ENCODE measurements at regions of chr7 and their contacts with region 1.

Region 1: DNA sequence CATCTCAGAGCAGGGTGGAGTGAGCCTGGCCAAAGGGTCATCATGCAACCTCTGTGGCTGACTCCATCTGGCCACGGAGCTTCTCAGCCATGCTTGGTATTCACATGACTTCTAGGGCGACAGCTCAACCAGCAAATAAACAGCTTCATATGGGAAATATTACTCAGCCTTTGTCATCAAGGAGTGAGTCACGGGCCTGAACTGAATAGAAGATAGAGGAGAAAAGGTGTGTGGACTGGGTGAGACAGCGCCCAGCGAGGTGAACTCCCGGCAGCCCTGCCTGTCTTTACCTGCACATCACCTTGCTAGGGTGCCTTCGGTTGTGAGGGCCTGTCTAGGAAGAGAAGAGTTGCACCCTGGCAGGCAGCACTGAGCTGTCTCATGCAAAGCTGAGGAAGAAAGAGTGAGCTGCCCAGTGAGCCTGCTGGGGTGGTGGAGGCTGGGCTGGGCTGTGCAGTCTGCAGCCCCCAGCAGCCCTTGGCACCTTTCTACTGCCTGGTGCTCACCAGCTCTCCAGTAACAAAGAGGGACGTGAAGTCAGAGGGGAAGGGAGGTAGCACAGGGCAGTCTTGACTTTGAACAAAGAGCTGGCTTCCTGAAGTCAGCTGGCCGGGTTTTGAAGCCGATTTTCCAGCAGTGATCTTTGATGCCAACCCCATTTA is 114.2 kb downstream of the EGFR start:
- DNase-seq: peak; percentile 97
- ATAC-seq: peak; percentile 83
- H3K4me3 ChIP-seq: peak overlapping the region; percentile 3 to 28
- H3K27ac ChIP-seq: peak overlapping the region; percentile 98
- H3K4me1 ChIP-seq: peaks cover 71 to 78% of the 10 kb centered on the region in 2 experiments
- H3K27me3 ChIP-seq: no peaks in the 10 kb centered on the region
- CTCF ChIP-seq: no peak
- POLR2A ChIP-seq: no peak
- RAD21 ChIP-seq: peak; percentile 38

Region 2: DNA sequence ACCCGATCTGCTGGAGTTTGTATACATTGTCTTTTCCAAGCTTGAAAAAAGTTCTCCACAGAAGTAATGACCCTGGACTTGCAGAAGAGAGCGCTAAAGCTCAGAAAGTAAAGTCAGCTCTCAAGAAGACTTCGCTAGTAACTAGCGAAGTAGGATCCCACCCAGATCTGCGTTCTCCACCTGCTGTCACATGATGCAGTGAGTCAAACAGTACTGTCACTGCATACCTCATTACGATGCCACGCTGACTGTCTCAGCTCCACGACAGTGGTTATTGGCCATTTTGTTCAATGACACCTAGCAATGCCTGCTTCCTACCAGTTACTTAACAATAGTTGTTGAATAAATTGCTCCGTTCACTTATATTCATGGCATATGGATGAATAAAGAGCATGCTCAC is 344.4 kb before region 1 on chr7:
- CTCF ChIA-PET with region 1: no interaction called
- POLR2A ChIA-PET with region 1: interaction called, 3 read pairs
- RAD21 ChIA-PET with region 1: no interaction called
- intact Hi-C with region 1: loop called (anchors 5 kb)
- DNase-seq: peak; percentile 95
- ATAC-seq: peak; percentile 99
- H3K4me3 ChIP-seq: no peak overlapping the region
- H3K27ac ChIP-seq: no peak overlapping the region
- H3K4me1 ChIP-seq: peaks cover 2 to 18% of the 10 kb centered on the region in 2 experiments; a peak in 3 of 4 replicates
- H3K27me3 ChIP-seq: no peaks in the 10 kb centered on the region
- CTCF ChIP-seq: peak; percentile 65 to 90 (median 73)
- POLR2A ChIP-seq: no peak
- RAD21 ChIP-seq: peak; percentile 96

Region 3: DNA sequence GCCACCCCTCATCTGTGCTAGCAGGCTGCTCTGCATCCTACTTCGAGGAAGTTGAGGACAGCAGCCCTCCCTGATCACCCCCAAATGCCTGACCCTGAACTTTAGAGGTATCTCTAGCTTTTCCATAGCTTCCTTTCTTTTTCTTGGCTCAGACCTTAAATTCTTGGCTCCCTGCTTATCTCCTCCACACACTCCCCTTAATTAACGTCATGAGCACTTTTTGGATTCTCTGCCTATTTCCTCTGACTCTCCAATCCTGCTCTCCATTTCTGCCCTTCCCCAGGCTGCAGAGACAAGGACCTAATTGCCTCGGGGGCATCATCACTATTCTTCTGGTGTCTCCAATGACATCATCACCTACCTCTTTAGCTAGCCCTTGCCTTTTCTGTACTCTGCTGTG is 333.2 kb before region 1 on chr7:
- CTCF ChIA-PET with region 1: no interaction called
- POLR2A ChIA-PET with region 1: no interaction called
- RAD21 ChIA-PET with region 1: no interaction called
- intact Hi-C with region 1: no loop called
- DNase-seq: no peak
- ATAC-seq: no peak
- H3K4me3 ChIP-seq: no peak overlapping the region
- H3K27ac ChIP-seq: no peak overlapping the region
- H3K4me1 ChIP-seq: peaks cover 0 to 3% of the 10 kb centered on the region in 2 experiments; a peak in 1 of 4 replicates
- H3K27me3 ChIP-seq: no peaks in the 10 kb centered on the region
- CTCF ChIP-seq: no peak
- POLR2A ChIP-seq: no peak
- RAD21 ChIP-seq: no peak

Region 4: GRCh38 chr7:54831644-54832099 is 301.3 kb before region 1 on chr7:
- CTCF ChIA-PET with region 1: no interaction called
- POLR2A ChIA-PET with region 1: interaction called, 6 read pairs
- RAD21 ChIA-PET with region 1: no interaction called
- intact Hi-C with region 1: loop called (anchors 2 kb)
- DNase-seq: peak; percentile 91
- ATAC-seq: peak; percentile 87
- H3K4me3 ChIP-seq: peak overlapping the region; percentile 26 to 38
- H3K27ac ChIP-seq: peak overlapping the region; percentile 77
- H3K4me1 ChIP-seq: peaks cover 13 to 38% of the 10 kb centered on the region in 2 experiments
- H3K27me3 ChIP-seq: no peaks in the 10 kb centered on the region
- CTCF ChIP-seq: no peak
- POLR2A ChIP-seq: no peak
- RAD21 ChIP-seq: peak; percentile 41

Region 5: GRCh38 chr7:55005241-55005851 is 127.7 kb before region 1 on chr7:
- CTCF ChIA-PET with region 1: no interaction called
- POLR2A ChIA-PET with region 1: no interaction called
- RAD21 ChIA-PET with region 1: no interaction called
- intact Hi-C with region 1: no loop called
- DNase-seq: no peak
- ATAC-seq: no peak
- H3K4me3 ChIP-seq: no peak overlapping the region
- H3K27ac ChIP-seq: no peak overlapping the region
- H3K4me1 ChIP-seq: no peaks in the 10 kb centered on the region
- H3K27me3 ChIP-seq: no peaks in the 10 kb centered on the region
- CTCF ChIP-seq: no peak
- POLR2A ChIP-seq: no peak
- RAD21 ChIP-seq: no peak

Region 6: GRCh38 chr7:55018361-55019190 is 114.4 kb before region 1 on chr7 and contains the start of gene EGFR:
- CTCF ChIA-PET with region 1: no interaction called
- POLR2A ChIA-PET with region 1: no interaction called
- RAD21 ChIA-PET with region 1: no interaction called
- intact Hi-C with region 1: loop called (anchors 2 kb)
- DNase-seq: peak; percentile 40
- ATAC-seq: peak; percentile 89
- H3K4me3 ChIP-seq: peak within 1 kb of the TSS; percentile 58 to 76
- H3K27ac ChIP-seq: peak within 1 kb of the TSS; percentile 88
- H3K4me1 ChIP-seq: peaks cover 12 to 17% of the 10 kb centered on the region in 2 experiments
- H3K27me3 ChIP-seq: no peaks in the 10 kb centered on the region
- CTCF ChIP-seq: no peak
- POLR2A ChIP-seq: no peak
- RAD21 ChIP-seq: no peak
- total RNA-seq, gene EGFR: 71.5 TPM

Region 7: DNA sequence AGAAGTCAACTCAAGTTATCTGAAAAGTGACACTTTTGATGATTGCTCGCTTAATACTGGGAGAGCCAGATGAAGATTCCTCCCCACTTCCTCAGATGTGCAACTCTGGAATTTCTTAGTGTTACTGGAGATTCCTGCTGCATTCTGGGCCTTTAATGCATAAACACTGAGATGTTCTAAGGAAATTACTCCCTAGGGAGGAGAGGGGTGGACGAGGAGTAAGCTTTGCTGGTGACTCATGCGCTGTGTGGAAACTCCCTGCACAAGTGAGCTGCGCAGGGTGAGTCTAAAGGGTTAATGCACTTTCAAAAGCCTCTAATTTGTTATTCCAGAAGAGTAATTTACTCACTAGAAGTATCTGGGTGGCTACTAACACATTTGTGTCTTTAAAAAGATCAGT is 67.9 kb before region 1 on chr7:
- CTCF ChIA-PET with region 1: no interaction called
- POLR2A ChIA-PET with region 1: interaction called, 5 read pairs
- RAD21 ChIA-PET with region 1: no interaction called
- intact Hi-C with region 1: loop called (anchors 2 kb)
- DNase-seq: peak; percentile 83
- ATAC-seq: peak; percentile 83
- H3K4me3 ChIP-seq: peak overlapping the region; percentile 8 to 43
- H3K27ac ChIP-seq: peak overlapping the region; percentile 70
- H3K4me1 ChIP-seq: peaks cover 33 to 80% of the 10 kb centered on the region in 2 experiments
- H3K27me3 ChIP-seq: no peaks in the 10 kb centered on the region
- CTCF ChIP-seq: no peak
- POLR2A ChIP-seq: no peak
- RAD21 ChIP-seq: no peak

Region 8: DNA sequence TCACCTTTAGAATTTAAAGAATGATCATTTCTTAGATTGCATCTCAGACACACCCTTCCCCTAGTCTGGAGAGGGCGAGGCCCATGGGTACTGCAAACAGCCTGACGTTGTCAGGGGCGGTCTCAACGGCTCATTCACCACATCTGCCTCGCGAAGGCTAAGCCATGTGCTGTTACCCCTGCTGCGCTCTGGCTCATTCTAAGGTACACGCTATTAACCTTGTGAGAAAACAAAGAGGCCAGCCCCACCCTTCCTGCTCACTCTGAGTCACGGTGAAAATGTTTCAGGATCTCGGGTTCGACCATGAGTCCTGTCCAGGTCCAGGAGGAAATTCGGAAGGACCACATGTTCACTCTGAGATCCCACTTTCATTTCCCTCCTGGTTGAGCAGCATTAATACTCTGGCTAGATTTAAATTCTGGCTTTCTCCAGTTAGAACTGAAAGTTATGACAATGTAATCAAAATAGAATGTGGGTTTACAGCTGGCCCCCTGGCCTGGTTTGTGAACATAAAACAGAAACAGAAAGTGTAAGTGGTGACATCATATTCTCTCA is 59.0 kb before region 1 on chr7:
- CTCF ChIA-PET with region 1: no interaction called
- POLR2A ChIA-PET with region 1: no interaction called
- RAD21 ChIA-PET with region 1: no interaction called
- intact Hi-C with region 1: loop called (anchors 2 kb)
- DNase-seq: peak; percentile 95
- ATAC-seq: peak; percentile 96
- H3K4me3 ChIP-seq: peak overlapping the region in 1 of 2 experiments; percentile 32; a peak in 1 of 4 replicates
- H3K27ac ChIP-seq: peak overlapping the region; percentile 75
- H3K4me1 ChIP-seq: peaks cover 43 to 94% of the 10 kb centered on the region in 2 experiments
- H3K27me3 ChIP-seq: no peaks in the 10 kb centered on the region
- CTCF ChIP-seq: no peak
- POLR2A ChIP-seq: no peak
- RAD21 ChIP-seq: no peak

Region 9: DNA sequence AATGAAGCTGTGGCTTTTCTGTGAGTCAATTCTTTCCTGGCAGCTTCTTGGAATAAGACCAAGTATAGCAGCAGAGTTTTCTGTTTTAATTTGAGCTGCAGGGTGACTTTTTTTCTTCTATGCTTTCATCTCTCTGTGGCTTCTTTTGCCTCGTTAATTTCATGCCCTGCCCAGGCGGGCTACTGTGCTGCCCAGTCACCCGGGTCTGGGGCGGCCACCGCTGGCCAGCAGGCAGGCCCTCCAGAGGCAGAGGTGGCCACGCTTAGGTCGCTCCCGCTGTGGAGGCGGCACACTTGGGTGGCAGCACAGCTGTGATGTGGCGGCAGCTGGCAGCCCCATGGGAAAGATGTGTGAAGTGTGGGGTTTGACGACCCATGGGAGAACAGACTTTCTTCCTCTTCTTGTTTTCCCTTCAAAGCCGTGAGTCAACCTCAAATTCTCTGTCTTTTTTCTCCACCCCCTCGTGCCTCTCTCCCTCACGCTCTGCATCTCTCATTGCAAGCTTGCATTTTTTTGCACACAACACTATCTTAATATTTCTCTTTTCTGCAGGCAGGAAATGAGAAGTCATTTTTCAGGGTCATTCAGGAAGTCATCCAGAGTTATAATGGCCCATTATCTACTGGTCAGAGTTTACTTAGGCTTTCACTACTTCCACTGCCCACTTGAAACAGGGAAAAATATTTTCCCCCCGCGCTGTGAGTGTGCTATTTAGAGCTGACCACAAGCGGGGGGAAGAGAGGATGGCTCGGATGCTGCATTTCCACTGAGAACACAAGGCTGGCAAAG is 46.4 kb before region 1 on chr7:
- CTCF ChIA-PET with region 1: no interaction called
- POLR2A ChIA-PET with region 1: interaction called, 4 read pairs
- RAD21 ChIA-PET with region 1: interaction called, 3 to 5 read pairs
- intact Hi-C with region 1: loop called (anchors 2 kb)
- DNase-seq: peak; percentile 64
- ATAC-seq: peak; percentile 88
- H3K4me3 ChIP-seq: peak overlapping the region in 1 of 2 experiments; percentile 44; a peak in 2 of 4 replicates
- H3K27ac ChIP-seq: peak overlapping the region; percentile 87
- H3K4me1 ChIP-seq: peaks cover 49 to 84% of the 10 kb centered on the region in 2 experiments
- H3K27me3 ChIP-seq: no peaks in the 10 kb centered on the region
- CTCF ChIP-seq: no peak
- POLR2A ChIP-seq: no peak
- RAD21 ChIP-seq: peak; percentile 32

Region 10: GRCh38 chr7:55099066-55099820 is 33.8 kb before region 1 on chr7:
- CTCF ChIA-PET with region 1: no interaction called
- POLR2A ChIA-PET with region 1: no interaction called
- RAD21 ChIA-PET with region 1: no interaction called
- intact Hi-C with region 1: no loop called
- DNase-seq: no peak
- ATAC-seq: no peak
- H3K4me3 ChIP-seq: no peak overlapping the region
- H3K27ac ChIP-seq: no peak overlapping the region
- H3K4me1 ChIP-seq: peaks cover 2 to 9% of the 10 kb centered on the region in 2 experiments
- H3K27me3 ChIP-seq: no peaks in the 10 kb centered on the region
- CTCF ChIP-seq: no peak
- POLR2A ChIP-seq: no peak
- RAD21 ChIP-seq: no peak

Measured in HCT116 (cell line).